Aorta (tissue), 5 donors: ENCODE measurements at regions of chr7 and their contacts with region 1.

Region 1: GRCh38 chr7:37633048-37633447 is 50.5 kb upstream of the GPR141 start:
- DNase-seq: no peak
- ATAC-seq: no peak
- H3K4me3 ChIP-seq: no peak overlapping the region
- H3K27ac ChIP-seq: no peak overlapping the region
- H3K4me1 ChIP-seq: no peaks in the 10 kb centered on the region
- H3K27me3 ChIP-seq: no peaks in the 10 kb centered on the region

Region 2: DNA sequence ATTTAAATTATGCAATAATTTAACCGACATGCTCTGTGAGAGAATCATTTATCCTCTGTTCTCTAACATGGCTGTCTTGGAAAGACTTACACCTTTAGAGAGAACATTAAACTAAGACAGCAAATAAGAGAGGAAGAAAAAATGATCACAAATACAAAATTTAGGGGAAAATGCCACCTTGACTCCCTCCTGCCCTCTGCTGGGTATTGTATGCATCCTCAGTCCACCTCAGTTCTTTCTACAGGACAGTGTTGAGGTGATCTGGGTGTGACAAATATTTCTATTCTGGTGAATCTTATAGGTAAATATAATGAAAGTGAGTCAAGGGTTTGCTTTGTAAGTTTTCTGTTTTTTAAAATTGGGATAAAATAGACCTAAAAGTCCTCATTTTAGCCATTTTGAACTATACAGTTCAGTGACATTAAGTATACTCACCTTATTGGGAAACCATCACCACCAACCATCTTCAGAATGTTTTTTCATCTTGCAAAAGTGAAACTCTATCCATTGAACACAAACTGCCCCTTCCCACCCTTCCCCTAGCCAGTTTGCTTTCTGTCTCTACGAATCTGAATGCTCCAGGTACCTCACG is 122.9 kb before region 1 on chr7:
- intact Hi-C with region 1: no loop called
- DNase-seq: no peak
- ATAC-seq: no peak
- H3K4me3 ChIP-seq: no peak overlapping the region
- H3K27ac ChIP-seq: no peak overlapping the region
- H3K4me1 ChIP-seq: no peaks in the 10 kb centered on the region
- H3K27me3 ChIP-seq: no peaks in the 10 kb centered on the region

Region 3: DNA sequence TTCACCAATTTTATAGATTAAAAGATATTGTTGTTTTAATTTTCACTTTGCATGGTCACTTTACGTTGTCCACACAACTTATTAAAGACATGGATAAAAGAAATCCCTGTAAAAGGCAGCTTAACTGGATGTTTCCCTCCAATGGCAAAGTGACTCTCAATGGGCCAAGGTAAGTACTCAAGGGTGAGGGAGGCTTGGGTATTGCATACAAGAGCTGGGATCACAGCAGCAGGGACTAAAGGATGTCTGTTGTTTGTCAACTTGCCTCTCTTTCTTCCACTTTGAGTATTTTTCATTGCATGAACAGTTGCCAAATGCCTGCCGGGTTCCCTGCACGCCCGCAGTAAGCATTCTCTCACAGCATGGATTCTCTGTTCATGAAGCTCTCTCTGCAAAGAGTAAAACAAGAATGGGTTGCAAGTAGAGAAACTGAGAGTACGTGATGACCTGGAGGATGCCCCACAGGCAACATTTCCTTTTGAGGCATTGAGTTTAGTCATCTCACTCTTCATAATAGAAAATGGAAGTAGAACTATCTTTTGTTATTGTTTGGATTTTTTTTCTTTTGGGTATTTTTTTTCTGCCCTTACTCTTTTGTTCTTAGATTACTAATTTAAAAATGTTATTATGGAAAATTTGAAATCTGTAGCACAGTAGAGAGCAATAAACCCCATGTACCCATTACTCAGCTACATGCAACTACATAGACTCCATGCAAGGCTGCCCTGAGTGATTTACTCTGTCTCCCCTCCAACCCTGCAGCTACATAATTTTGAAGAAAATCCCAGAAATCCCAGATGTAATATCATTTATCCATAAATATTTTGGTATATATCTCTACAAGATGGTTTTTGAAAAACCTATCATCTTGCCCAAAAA is 76.8 kb after region 1 on chr7:
- intact Hi-C with region 1: no loop called
- DNase-seq: no peak
- ATAC-seq: no peak
- H3K4me3 ChIP-seq: no peak overlapping the region
- H3K27ac ChIP-seq: no peak overlapping the region
- H3K4me1 ChIP-seq: peaks cover 8% of the 10 kb centered on the region in 2 donors
- H3K27me3 ChIP-seq: no peaks in the 10 kb centered on the region

Region 4: DNA sequence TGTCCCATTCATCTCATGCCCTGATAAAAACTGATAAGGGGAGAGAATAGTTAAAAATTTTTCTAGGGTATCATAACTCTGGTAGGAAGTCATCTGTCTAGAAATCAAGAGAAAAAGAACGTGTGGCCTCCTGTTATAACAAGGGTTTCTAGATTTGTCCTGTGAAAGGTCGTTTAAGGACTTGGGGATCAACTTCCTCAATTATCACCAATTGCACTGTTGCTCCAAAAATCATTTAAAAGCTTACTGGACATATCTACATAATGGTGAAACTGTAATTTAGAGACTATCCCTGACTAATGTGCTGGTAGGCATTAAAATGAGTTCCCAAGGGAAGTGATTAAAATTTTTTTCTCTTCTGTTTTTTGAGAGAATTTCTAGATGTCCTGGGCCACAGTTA is 108.7 kb after region 1 on chr7:
- intact Hi-C with region 1: loop called in 1 of 2 experiments (anchors 10 kb)
- DNase-seq: no peak
- ATAC-seq: no peak
- H3K4me3 ChIP-seq: no peak overlapping the region
- H3K27ac ChIP-seq: no peak overlapping the region
- H3K4me1 ChIP-seq: peaks cover 0 to 2% of the 10 kb centered on the region in 2 donors
- H3K27me3 ChIP-seq: no peaks in the 10 kb centered on the region